ENCODE measurements at regions of chr16 and their contacts with region 1.

Region 1: GRCh38 chr16:49866595-49867071 is 10.7 kb upstream of the ZNF423 start:
- DNase-seq: no peak
- ATAC-seq: peak; percentile 59

Region 2: GRCh38 chr16:49652456-49653172 is 214.0 kb before region 1 on chr16:
- intact Hi-C with region 1: loop called (anchors 10 kb)
- DNase-seq: peak; percentile 74
- ATAC-seq: peak; percentile 94

Region 3: GRCh38 chr16:49890876-49891275 is 24.2 kb after region 1 on chr16:
- intact Hi-C with region 1: no loop called
- DNase-seq: no peak
- ATAC-seq: peak; percentile 50

Region 4: DNA sequence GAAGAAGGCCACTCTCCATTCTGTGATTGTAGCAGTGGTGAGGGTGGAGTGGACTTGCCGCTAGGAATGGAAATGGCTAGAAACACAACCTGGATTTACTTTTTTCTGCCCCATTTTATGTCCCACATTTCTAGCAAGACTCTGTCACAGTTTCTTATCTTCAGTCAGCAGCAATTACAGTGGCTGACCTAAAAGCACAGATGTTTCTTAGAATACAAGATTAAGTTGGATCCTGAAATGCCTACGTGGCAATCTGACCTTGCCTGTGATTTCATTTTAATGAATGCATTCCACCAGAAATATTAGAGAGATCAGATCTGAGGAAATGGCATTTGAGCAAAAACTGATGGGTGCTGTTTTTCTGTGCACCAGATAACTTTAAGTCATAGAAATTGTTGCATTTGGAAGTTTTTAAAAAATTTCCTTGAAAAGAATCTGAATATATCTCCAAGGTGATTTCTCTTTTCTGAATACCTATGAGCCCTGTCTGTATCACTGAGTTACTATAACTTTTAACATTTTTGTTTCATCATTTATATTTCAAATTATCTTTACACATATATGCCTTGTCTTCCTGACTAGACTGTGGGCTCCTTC is 204.5 kb after region 1 on chr16:
- intact Hi-C with region 1: no loop called
- DNase-seq: no peak
- ATAC-seq: no peak

Measured in sciatic nerve (tissue), 2 donors.